Ovary (tissue), 10 donors: ENCODE measurements at regions of chr9 and their contacts with region 1.

Region 1: GRCh38 chr9:118624608-118625007 is 744.6 kb downstream of the BRINP1 start:
- DNase-seq: no peak
- H3K4me3 ChIP-seq: no peak overlapping the region
- H3K27ac ChIP-seq: no peak overlapping the region
- H3K4me1 ChIP-seq: no peaks in the 10 kb centered on the region
- H3K27me3 ChIP-seq: no peaks in the 10 kb centered on the region
- CTCF ChIP-seq: no peak
- EP300 ChIP-seq: no peak
- POLR2A ChIP-seq: no peak

Region 2: GRCh38 chr9:120016231-120016630 is 1391.6 kb after region 1 on chr9:
- intact Hi-C with region 1: loop called in 1 of 4 experiments (anchors 5 kb)
- DNase-seq: no peak
- H3K4me3 ChIP-seq: no peak overlapping the region
- H3K27ac ChIP-seq: no peak overlapping the region
- H3K4me1 ChIP-seq: no peaks in the 10 kb centered on the region
- H3K27me3 ChIP-seq: no peaks in the 10 kb centered on the region
- CTCF ChIP-seq: no peak
- EP300 ChIP-seq: no peak
- POLR2A ChIP-seq: no peak